ENCODE measurements at regions of chr19 and their contacts with region 1.

Region 1: DNA sequence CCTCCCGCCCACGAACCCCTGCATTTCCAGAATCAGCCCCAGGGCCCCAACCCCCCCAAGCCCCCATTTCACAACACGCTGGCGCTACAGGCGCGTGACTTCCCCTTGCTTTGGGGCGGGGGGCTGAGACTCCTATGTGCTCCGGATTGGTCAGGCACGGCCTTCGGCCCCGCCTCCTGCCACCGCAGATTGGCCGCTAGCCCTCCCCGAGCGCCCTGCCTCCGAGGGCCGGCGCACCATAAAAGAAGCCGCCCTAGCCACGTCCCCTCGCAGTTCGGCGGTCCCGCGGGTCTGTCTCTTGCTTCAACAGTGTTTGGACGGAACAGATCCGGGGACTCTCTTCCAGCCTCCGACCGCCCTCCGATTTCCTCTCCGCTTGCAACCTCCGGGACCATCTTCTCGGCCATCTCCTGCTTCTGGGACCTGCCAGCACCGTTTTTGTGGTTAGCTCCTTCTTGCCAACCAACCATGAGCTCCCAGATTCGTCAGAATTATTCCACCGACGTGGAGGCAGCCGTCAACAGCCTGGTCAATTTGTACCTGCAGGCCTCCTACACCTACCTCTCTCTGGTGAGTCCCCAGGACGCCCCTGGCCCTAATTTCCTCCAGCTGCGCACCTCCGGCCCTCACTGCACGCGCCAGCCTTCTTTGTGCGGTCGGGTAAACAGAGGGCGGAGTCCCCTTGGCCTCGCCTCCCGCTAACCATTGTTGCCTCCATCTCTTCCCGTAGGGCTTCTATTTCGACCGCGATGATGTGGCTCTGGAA is at the start of gene FTL:
- DNase-seq: peak; percentile 95
- H3K4me3 Mint-ChIP-seq: peak within 1 kb of the TSS; percentile 97
- H3K27ac Mint-ChIP-seq: peak within 1 kb of the TSS; percentile 96
- H3K4me1 Mint-ChIP-seq: peaks cover 35% of the 10 kb centered on the region
- H3K27me3 Mint-ChIP-seq: no peaks in the 10 kb centered on the region
- CTCF ChIP-seq: no peak
- total RNA-seq, gene FTL: 275 and 390 TPM in 2 replicates

Region 2: GRCh38 chr19:48835734-48836088 is 129.5 kb before region 1 on chr19:
- CTCF ChIA-PET with region 1: no interaction called
- POLR2A ChIA-PET with region 1: no interaction called
- intact Hi-C with region 1: no loop called
- DNase-seq: peak; percentile 91
- H3K4me3 Mint-ChIP-seq: no peak overlapping the region
- H3K27ac Mint-ChIP-seq: no peak overlapping the region
- H3K4me1 Mint-ChIP-seq: peaks cover 5% of the 10 kb centered on the region
- H3K27me3 Mint-ChIP-seq: no peaks in the 10 kb centered on the region
- CTCF ChIP-seq: peak; percentile 76

Region 3: DNA sequence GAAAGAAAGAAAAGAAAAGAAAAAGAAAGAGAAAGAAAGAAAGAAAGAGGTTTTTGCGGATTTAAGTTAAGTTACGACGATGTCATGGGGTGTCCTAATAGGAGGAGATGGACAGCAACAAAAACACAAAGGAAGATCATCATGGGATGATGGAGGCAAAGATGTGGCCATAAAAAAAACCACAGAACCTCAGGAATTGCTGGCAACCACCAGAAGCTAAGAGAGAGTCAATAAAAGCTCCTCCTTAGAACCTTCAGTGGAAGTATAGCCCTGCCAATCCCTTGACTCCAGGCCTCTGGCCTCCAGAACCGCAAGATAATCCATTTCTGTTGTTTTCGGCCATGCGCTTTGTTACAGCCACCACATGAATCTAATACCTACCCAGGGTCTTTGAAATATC is 108.3 kb before region 1 on chr19:
- CTCF ChIA-PET with region 1: no interaction called
- POLR2A ChIA-PET with region 1: no interaction called
- intact Hi-C with region 1: no loop called
- DNase-seq: no peak
- H3K4me3 Mint-ChIP-seq: no peak overlapping the region
- H3K27ac Mint-ChIP-seq: no peak overlapping the region
- H3K4me1 Mint-ChIP-seq: no peaks in the 10 kb centered on the region
- H3K27me3 Mint-ChIP-seq: no peaks in the 10 kb centered on the region
- CTCF ChIP-seq: no peak

Region 4: GRCh38 chr19:48899781-48900476 is 65.3 kb before region 1 on chr19 and contains the start of gene NUCB1:
- CTCF ChIA-PET with region 1: no interaction called
- POLR2A ChIA-PET with region 1: interaction called, 13 read pairs
- intact Hi-C with region 1: loop called (anchors 2 kb)
- DNase-seq: peak; percentile 99
- H3K4me3 Mint-ChIP-seq: peak within 1 kb of the TSS; percentile 99
- H3K27ac Mint-ChIP-seq: peak within 1 kb of the TSS; percentile 87
- H3K4me1 Mint-ChIP-seq: peaks cover 14% of the 10 kb centered on the region
- H3K27me3 Mint-ChIP-seq: no peaks in the 10 kb centered on the region
- CTCF ChIP-seq: no peak
- total RNA-seq, gene NUCB1: 61.4 and 76.8 TPM in 2 replicates

Region 5: GRCh38 chr19:48954595-48955310 is 10.5 kb before region 1 on chr19 and contains the start of gene BAX:
- CTCF ChIA-PET with region 1: interaction called, 3 read pairs
- POLR2A ChIA-PET with region 1: interaction called, 38 read pairs
- intact Hi-C with region 1: no loop called
- DNase-seq: peak; percentile 98
- H3K4me3 Mint-ChIP-seq: peak within 1 kb of the TSS; percentile 81
- H3K27ac Mint-ChIP-seq: peak within 1 kb of the TSS; percentile 83
- H3K4me1 Mint-ChIP-seq: peaks cover 6% of the 10 kb centered on the region
- H3K27me3 Mint-ChIP-seq: no peaks in the 10 kb centered on the region
- CTCF ChIP-seq: no peak
- total RNA-seq, gene BAX: 130 and 152 TPM in 2 replicates

Region 6: DNA sequence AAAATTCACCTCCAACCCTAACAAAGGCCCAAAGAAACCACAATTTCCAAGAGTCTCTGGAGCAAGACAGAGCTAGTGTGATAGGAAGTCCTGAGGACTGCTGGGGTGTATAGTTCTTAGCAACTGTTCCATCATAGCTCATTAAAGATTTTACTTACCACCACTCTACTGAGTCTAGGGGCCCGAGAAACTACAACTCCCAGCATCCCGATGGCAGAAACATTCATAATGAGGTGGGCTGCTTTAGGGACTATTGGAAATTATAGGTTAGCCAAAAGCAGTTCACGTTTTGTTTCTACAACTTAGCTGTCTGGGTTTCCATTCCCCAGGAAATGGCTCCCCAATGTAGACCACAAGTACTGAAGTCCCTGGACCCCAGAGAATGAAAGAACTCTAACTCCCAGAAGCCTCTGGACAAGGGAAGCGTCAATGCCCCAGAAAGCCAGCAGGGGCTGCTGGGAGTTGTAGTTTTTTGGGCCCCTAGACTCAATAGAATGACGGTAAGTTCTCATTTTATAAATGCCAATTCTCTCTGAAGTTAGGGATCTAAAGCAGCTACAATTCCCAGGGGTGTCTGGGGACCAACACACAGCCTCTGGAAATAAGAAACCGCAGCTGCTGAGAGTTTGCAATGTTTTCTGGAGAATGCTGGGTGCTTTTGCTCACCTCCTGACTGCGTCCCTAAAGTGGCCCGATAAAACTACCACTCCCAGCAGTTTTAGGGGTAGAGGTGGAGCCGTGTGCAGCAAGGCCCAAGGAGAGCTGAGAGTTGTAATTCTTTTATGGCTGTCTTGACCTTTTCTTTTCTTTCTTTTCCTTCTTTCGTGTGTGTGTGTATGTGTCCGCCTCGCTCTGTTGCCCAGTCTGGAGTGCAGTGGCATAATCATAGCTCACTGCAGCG is 11.0 kb after region 1 on chr19:
- CTCF ChIA-PET with region 1: interaction called, 13 read pairs
- POLR2A ChIA-PET with region 1: interaction called, 47 read pairs
- intact Hi-C with region 1: no loop called
- DNase-seq: peak; percentile 20
- H3K4me3 Mint-ChIP-seq: no peak overlapping the region
- H3K27ac Mint-ChIP-seq: no peak overlapping the region
- H3K4me1 Mint-ChIP-seq: peaks cover 12% of the 10 kb centered on the region
- H3K27me3 Mint-ChIP-seq: no peaks in the 10 kb centered on the region
- CTCF ChIP-seq: no peak

Region 7: DNA sequence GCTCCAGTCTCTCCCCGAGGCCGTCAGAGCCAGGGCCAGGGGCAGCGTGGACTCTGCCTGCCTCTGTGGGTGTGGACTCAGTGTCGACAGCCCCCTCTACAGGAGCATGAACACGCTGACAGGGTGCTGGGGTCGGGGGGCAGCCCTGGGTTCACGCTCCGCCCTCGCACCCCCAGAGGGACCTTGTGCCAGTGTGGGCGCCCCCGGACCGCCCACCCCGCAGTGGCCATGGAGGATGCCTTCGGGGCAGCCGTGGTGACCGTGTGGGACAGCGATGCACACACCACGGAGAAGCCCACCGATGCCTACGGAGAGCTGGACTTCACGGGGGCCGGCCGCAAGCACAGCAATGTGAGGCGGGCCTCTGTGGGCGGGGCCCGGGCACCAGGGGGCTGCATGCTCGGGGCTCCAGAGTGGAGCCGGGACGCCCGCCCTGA is 200.7 kb after region 1 on chr19:
- CTCF ChIA-PET with region 1: no interaction called
- POLR2A ChIA-PET with region 1: no interaction called
- intact Hi-C with region 1: no loop called
- DNase-seq: no peak
- H3K4me3 Mint-ChIP-seq: no peak overlapping the region
- H3K27ac Mint-ChIP-seq: no peak overlapping the region
- H3K4me1 Mint-ChIP-seq: no peaks in the 10 kb centered on the region
- H3K27me3 Mint-ChIP-seq: no peaks in the 10 kb centered on the region
- CTCF ChIP-seq: no peak